Activated CD8-positive, alpha-beta memory T cell treated with anti-CD3 and anti-CD28 coated beads, Interleukin-2, amount 10 ng/mL, durations not matched to agents 7 days and 5 days (primary cell): ENCODE measurements at regions of chr9 and their contacts with region 1.

Region 1: DNA sequence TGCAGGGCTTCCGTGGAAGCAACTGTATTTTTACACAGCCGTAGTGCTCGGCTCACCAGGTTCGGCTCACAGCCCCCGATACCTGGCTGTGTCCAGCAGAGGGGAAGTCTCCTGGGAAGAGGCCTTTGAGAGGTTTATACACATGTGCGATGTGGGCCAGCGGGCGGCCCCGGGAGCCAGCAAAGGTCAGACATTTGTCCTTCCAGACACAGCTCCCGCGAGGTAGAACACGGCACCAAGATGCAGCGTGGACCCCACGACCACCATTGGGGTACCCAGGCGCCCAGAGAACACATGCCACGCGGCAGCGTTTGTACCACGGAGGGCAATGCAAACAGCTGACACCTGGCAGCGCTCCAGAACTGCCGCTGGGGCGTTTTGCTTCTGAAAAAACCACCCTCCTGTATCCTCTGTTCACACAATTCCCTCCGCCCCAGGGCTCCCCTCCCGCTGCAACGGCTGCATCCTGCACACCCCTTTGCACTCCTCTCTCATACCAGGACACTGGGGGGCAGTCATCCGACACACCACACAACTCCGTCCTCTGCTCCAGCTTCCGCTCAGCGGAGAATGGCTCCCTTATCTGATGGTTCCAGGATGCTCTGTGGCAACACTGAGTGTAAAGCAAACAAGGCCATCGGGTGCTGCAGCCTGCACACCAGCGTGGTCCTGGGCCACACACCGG is 235.3 kb downstream of the SYK start:
- DNase-seq: peak; percentile 90
- ATAC-seq: peak; percentile 95
- H3K4me3 Mint-ChIP-seq: peak overlapping the region; percentile 34
- H3K27ac Mint-ChIP-seq: peak overlapping the region; percentile 63
- H3K4me1 Mint-ChIP-seq: peaks cover 66% of the 10 kb centered on the region
- H3K27me3 Mint-ChIP-seq: no peaks in the 10 kb centered on the region

Region 2: DNA sequence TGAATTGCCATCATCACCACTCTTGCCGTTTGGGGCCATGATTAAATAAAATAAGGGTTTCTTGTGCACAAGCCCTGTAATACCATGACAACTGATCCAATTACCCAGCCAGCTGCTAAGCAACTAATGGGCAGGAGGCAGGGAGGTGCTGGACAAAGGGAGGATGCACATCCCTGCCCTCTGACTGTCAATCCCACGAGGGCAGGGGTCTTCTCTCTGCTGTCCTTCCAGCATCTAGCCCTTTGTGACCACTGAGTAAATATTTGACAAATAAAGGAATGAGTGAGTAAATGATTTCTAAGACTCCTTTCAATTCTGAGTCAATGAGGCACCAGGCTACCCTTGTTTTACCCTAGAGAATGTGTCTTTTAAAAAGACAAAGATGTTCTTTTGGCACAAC is 11.8 kb after region 1 on chr9:
- CTCF ChIA-PET with region 1: interaction called, 10 read pairs
- DNase-seq: peak; percentile 31
- ATAC-seq: no peak
- H3K4me3 Mint-ChIP-seq: no peak overlapping the region
- H3K27ac Mint-ChIP-seq: peak overlapping the region; percentile 84
- H3K4me1 Mint-ChIP-seq: peaks cover 66% of the 10 kb centered on the region
- H3K27me3 Mint-ChIP-seq: no peaks in the 10 kb centered on the region

Region 3: GRCh38 chr9:91150998-91151717 is 114.2 kb after region 1 on chr9:
- CTCF ChIA-PET with region 1: interaction called, 14 read pairs
- DNase-seq: peak; percentile 82
- ATAC-seq: peak; percentile 80
- H3K4me3 Mint-ChIP-seq: peak overlapping the region; percentile 51
- H3K27ac Mint-ChIP-seq: peak overlapping the region; percentile 94
- H3K4me1 Mint-ChIP-seq: peaks cover 95% of the 10 kb centered on the region
- H3K27me3 Mint-ChIP-seq: peaks cover 2% of the 10 kb centered on the region

Region 4: DNA sequence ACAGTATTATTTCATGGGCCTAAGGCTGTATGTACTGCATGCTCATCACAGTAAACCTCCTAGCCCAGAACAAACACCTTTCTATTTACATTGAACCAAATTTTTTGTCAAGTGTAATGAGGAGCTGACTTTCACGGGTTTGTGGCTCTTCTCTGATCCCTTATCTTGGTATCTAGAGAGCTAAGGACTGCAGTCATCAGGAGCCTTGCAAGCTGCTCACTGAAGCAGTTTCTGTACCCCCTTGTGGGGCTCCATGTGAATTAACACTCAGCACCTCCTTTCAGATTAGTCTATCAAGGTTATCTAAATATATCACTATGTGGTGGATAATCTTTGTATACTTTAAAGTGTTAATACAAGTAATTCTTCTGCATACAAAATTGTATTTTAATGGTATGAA is 216.5 kb after region 1 on chr9:
- CTCF ChIA-PET with region 1: interaction called, 18 read pairs
- DNase-seq: peak; percentile 77
- ATAC-seq: peak; percentile 96
- H3K4me3 Mint-ChIP-seq: no peak overlapping the region
- H3K27ac Mint-ChIP-seq: no peak overlapping the region
- H3K4me1 Mint-ChIP-seq: peaks cover 47% of the 10 kb centered on the region
- H3K27me3 Mint-ChIP-seq: no peaks in the 10 kb centered on the region

Region 5: DNA sequence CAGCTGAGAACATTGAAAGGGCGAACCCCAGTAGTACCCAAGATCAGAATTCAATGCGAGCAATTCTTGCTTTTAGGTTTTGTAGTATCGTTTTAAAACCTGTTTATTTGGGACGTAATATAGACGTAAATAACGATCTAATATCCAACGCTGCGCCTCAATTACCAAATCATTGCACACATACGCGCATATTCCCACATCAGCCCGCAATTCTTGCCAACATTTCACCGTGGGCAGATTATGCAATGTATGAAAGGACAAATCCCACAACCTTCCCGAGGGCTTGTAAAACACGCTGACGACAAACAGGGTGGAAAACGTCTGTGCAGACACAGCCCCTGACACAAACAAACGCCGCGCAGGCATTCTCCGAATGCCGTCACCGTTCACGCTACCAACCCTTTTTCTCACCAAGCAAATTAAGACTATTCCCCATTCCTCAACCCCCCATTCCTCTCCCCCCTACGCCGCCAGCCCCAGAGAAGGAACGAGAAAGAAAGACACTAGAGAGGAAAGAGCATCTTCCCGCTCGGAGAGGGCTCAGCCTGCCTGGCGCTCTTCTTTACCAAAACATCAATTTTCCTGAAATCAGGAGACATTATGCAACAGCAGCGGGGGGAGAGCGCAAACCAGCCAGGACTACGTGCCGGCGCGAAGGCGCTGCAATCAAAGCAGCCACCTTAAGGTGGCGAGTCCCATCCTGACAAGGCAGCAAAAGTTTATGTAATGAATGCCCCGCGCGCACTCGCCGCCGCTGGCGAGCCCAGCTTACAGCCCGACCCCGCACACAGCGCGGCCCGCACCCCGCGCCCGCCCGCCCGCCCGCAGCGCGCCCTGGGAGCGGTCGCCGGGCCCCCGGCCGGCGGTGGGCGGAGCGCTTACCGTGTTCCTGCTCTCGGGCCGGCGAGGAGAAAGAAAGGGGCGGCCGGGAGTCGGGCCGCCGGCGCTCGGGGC is 386.1 kb after region 1 on chr9:
- CTCF ChIA-PET with region 1: interaction called, 120 read pairs
- DNase-seq: peak; percentile 82
- ATAC-seq: peak; percentile 34
- H3K4me3 Mint-ChIP-seq: peak overlapping the region; percentile 86
- H3K27ac Mint-ChIP-seq: peak overlapping the region; percentile 95
- H3K4me1 Mint-ChIP-seq: peaks cover 57% of the 10 kb centered on the region
- H3K27me3 Mint-ChIP-seq: no peaks in the 10 kb centered on the region